WTC11 (cell line): ENCODE measurements at regions of chr18 and their contacts with region 1.

Region 1: GRCh38 chr18:11310476-11311086 is 161.2 kb upstream of the PIEZO2 start:
- DNase-seq: peak; percentile 80
- ATAC-seq: peak; percentile 90
- H3K4me3 Mint-ChIP-seq: no peak overlapping the region
- H3K27ac Mint-ChIP-seq: no peak overlapping the region
- H3K4me1 Mint-ChIP-seq: no peaks in the 10 kb centered on the region
- H3K27me3 Mint-ChIP-seq: no peaks in the 10 kb centered on the region
- CTCF ChIP-seq: peak; percentile 74

Region 2: GRCh38 chr18:11005528-11005927 is 305.1 kb before region 1 on chr18:
- CTCF ChIA-PET with region 1: no interaction called
- POLR2A ChIA-PET with region 1: no interaction called
- DNase-seq: no peak
- ATAC-seq: no peak
- H3K4me3 Mint-ChIP-seq: no peak overlapping the region
- H3K27ac Mint-ChIP-seq: no peak overlapping the region
- H3K4me1 Mint-ChIP-seq: peaks cover 22% of the 10 kb centered on the region
- H3K27me3 Mint-ChIP-seq: no peaks in the 10 kb centered on the region
- CTCF ChIP-seq: no peak

Region 3: GRCh38 chr18:11163665-11164064 is 146.9 kb before region 1 on chr18:
- CTCF ChIA-PET with region 1: interaction called, 12 read pairs
- POLR2A ChIA-PET with region 1: no interaction called
- DNase-seq: peak; percentile 64
- ATAC-seq: peak; percentile 87
- H3K4me3 Mint-ChIP-seq: no peak overlapping the region
- H3K27ac Mint-ChIP-seq: no peak overlapping the region
- H3K4me1 Mint-ChIP-seq: peaks cover 14% of the 10 kb centered on the region
- H3K27me3 Mint-ChIP-seq: peaks cover 67% of the 10 kb centered on the region
- CTCF ChIP-seq: peak; percentile 31; the same call in 1 of the 2 replicates

Region 4: DNA sequence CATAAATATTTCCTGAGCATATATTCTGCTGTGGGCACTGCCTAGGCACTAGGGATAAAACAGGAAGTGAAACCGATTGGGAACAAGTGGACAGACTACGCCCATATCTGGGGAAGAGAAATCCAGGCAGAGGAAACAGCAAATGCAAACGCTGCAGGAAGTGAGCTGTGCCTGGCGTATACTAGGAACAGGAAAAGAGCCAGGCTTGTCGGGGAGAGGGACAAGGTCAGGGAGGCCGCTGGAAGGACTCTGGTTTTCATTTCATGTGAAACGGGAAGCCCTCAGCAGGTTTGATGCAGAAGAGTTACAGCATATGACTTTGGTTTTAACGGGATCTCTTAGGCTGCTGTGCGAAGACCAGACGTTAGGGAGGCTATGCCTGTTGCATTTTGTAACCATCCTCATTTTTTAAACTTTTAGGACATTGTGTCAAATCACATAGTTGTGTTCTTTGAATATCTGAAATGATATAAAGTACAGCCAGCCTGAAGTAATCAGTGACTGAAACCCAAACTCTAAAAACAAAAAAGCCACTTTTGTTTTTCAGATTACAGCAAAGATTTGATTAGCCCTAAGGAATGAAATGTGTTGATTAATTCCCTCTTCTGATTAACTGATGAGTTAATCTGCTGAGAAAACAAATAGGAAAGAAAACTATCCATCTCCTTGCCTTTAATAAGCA is 51.0 kb before region 1 on chr18:
- CTCF ChIA-PET with region 1: no interaction called
- POLR2A ChIA-PET with region 1: no interaction called
- DNase-seq: no peak
- ATAC-seq: peak; percentile 29; the same call in 1 of the 2 replicates
- H3K4me3 Mint-ChIP-seq: no peak overlapping the region
- H3K27ac Mint-ChIP-seq: 0 out of 2 replicates have a peak overlapping the region, but pooled peaks have one; percentile 15
- H3K4me1 Mint-ChIP-seq: peaks cover 33% of the 10 kb centered on the region
- H3K27me3 Mint-ChIP-seq: no peaks in the 10 kb centered on the region; the same call in 1 of the 2 replicates
- CTCF ChIP-seq: no peak

Region 5: DNA sequence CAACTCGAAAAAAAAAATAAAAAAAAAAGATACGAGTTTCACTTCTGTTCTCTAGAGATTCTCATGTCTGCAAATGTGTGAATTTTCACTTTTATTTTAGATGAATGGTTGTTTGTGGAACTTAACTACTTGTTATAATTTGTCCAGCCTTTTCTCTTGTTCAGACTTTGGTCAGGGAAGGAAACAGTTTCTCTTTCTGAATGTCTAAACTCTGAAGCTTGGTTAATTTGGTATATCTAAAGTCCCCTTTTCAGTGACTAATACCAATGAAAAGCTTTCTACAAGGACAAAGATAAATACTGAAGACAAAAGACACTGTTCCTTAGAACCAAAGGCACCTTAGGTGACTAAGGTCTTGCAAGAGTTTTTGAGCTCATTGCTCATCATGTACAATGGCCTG is 16.8 kb before region 1 on chr18:
- CTCF ChIA-PET with region 1: interaction called, 11 read pairs
- POLR2A ChIA-PET with region 1: no interaction called
- DNase-seq: no peak
- ATAC-seq: no peak
- H3K4me3 Mint-ChIP-seq: no peak overlapping the region
- H3K27ac Mint-ChIP-seq: no peak overlapping the region
- H3K4me1 Mint-ChIP-seq: peaks cover 20% of the 10 kb centered on the region
- H3K27me3 Mint-ChIP-seq: no peaks in the 10 kb centered on the region
- CTCF ChIP-seq: no peak

Region 6: DNA sequence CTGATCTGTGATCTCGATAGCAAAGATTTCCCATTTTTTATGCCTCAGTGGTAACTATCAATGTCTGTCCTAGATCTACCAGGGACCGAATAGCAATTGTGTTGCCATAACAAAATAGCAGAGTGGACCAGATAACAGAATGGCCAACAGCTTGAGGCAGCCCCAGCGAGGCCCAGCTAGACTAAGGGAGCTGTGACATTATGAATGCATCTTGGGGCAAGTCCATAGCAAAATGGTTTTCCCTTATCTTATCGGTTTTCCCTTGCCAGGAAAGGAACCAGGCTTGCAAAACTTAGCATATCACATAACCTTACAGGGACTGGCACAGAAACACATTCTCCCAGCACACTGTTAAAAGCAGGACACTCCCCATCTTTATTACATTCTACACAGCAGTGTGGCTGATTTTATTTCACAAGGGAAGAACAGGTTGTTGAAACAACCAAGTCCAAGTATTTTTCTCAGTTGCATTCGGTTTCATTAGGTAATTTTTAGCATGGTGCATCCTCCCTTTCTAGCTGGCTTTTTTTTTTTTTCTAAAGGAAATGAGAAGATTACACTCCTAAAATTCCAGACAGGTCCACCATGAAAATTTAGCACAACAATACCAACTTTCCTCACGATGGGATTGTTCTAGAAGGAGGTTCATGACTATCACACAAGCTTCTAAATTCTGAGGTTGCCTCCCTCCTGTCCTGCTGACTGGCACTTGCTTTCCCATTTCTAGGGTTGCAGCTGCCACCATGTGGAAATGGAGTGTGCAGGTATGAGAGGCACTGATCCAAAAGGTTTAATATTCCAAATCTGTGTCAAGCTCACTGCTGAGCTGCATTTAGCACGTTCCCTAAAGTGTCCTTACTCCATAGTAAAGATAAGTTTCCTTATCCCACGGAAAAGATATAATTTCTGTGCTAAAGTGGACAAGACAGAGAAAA is 201.8 kb after region 1 on chr18:
- CTCF ChIA-PET with region 1: interaction called, 17 read pairs
- POLR2A ChIA-PET with region 1: no interaction called
- DNase-seq: no peak
- ATAC-seq: peak; percentile 48; the same call in 1 of the 2 replicates
- H3K4me3 Mint-ChIP-seq: no peak overlapping the region
- H3K27ac Mint-ChIP-seq: no peak overlapping the region
- H3K4me1 Mint-ChIP-seq: peaks cover 4% of the 10 kb centered on the region; the same call in 1 of the 2 replicates
- H3K27me3 Mint-ChIP-seq: no peaks in the 10 kb centered on the region
- CTCF ChIP-seq: no peak